ENCODE measurements at regions of chr2 and their contacts with region 1.

Region 1: DNA sequence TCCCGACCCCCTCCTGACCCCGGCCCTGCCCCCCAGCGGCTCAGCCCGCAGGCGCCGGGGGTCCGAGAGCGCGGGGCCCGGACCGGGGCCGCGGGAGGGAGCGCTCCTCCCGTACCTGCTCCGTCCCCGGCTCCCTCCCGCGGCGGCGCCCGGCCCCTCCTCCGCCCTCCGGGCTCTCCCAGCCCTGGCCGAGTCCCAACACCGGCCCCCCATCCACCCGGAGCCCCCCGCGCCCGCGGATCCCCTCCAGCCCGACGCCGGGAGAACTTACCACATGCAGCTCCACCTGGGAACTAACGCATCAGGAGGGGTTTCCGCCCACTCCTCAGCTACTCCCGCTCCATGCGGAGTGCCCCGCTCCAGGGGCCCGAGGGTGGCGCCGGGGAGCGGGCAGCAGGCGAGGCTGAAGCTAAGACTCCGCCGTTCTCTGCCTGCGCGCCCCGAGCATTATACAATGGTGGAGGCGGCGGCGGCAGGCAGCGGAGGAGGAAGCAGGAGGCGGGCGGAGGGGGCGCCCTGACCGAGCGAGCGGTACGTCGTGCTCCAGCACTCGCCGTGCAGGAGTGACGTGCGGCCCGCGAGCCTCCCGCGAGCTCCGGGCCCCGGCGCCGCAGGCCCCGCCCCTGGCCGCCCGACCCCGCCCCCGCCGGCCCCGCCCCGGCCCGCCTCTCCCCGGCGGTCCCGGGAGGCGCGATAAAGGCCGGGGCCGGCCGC is at the start of gene SERTAD2:
- DNase-seq: peak; percentile 84 to 89 (median 88)
- H3K4me3 ChIP-seq: peak within 1 kb of the TSS; percentile 70 to 83
- H3K4me3 Mint-ChIP-seq: peak within 1 kb of the TSS; percentile 90 to 99 (median 92)
- H3K27ac ChIP-seq: peak within 1 kb of the TSS; percentile 83
- H3K27ac Mint-ChIP-seq: peak within 1 kb of the TSS; percentile 90 to 98 (median 95)
- H3K4me1 ChIP-seq: peaks cover 53% of the 10 kb centered on the region
- H3K4me1 Mint-ChIP-seq: peaks cover 34 to 63% (median 50%) of the 10 kb centered on the region in 4 donors
- H3K27me3 ChIP-seq: no peaks in the 10 kb centered on the region
- H3K27me3 Mint-ChIP-seq: no peaks in the 10 kb centered on the region
- total RNA-seq, gene SERTAD2: 23.5 to 24.6 TPM

Region 2: DNA sequence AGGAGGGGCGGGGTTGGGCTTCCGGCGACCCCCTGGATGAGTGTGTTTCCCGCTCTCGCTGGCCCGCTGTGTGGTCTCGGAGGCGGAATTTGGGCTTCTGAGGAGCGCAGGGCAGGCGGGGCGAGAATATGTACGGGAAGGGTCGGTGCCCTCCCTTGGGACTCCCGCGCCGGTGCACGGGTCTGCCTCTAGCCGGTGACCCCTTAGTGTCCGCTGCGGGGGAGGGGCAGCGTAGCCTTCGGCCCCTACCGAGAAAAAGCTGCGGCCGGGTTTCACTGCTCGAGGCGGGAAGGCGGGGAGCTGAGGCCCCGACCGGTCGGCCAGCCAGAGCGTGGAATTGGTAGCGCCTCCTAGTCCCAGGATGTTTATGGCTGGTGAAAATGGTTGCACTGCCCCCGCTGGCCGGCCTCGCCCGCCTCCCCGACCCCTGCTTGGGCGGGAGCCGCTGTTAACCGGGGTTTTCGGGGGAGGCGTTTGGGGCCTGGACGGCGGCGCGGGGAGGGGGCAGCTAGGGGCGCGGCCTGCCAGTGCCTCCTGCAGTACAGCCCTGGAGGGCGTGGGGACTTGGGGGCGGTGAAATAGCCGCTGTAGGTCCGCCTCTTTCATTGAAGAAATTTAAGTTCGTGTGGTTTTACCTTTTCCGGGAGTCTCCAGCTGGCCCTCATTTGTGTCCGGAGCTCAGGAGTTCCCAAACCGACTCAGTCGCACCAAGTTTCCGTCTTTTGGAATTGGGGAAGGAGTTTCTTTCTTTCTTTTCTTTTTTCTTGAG is 812.1 kb before region 1 on chr2 and contains the start of gene UGP2:
- CTCF ChIA-PET with region 1: no interaction called
- POLR2A ChIA-PET with region 1: interaction called, 10 read pairs
- intact Hi-C with region 1: no loop called
- DNase-seq: peak; percentile 82 to 94 (median 83)
- H3K4me3 ChIP-seq: peak within 1 kb of the TSS; percentile 63 to 85
- H3K4me3 Mint-ChIP-seq: peak within 1 kb of the TSS; percentile 96 to 100 (median 98)
- H3K27ac ChIP-seq: peak within 1 kb of the TSS; percentile 71
- H3K27ac Mint-ChIP-seq: peak within 1 kb of the TSS; percentile 95 to 100 (median 97)
- H3K4me1 ChIP-seq: peaks cover 44% of the 10 kb centered on the region
- H3K4me1 Mint-ChIP-seq: peaks cover 38 to 63% (median 51%) of the 10 kb centered on the region in 4 donors
- H3K27me3 ChIP-seq: no peaks in the 10 kb centered on the region
- H3K27me3 Mint-ChIP-seq: no peaks in the 10 kb centered on the region
- total RNA-seq, gene UGP2: 77.6 to 92.7 TPM

Region 3: GRCh38 chr2:64666810-64667438 is 13.4 kb after region 1 on chr2:
- CTCF ChIA-PET with region 1: interaction called, 118 read pairs
- POLR2A ChIA-PET with region 1: interaction called, 158 read pairs
- intact Hi-C with region 1: loop called (anchors 1 kb)
- DNase-seq: peak in 3 of 5 donors; percentile 12 to 25 (median 18)
- H3K4me3 ChIP-seq: no peak overlapping the region
- H3K4me3 Mint-ChIP-seq: peak overlapping the region; percentile 1 to 68 (median 35)
- H3K27ac ChIP-seq: no peak overlapping the region
- H3K27ac Mint-ChIP-seq: peak overlapping the region; percentile 61 to 94 (median 67)
- H3K4me1 ChIP-seq: peaks cover 34% of the 10 kb centered on the region
- H3K4me1 Mint-ChIP-seq: peaks cover 15 to 34% (median 25%) of the 10 kb centered on the region in 4 donors
- H3K27me3 ChIP-seq: no peaks in the 10 kb centered on the region
- H3K27me3 Mint-ChIP-seq: no peaks in the 10 kb centered on the region

Region 4: DNA sequence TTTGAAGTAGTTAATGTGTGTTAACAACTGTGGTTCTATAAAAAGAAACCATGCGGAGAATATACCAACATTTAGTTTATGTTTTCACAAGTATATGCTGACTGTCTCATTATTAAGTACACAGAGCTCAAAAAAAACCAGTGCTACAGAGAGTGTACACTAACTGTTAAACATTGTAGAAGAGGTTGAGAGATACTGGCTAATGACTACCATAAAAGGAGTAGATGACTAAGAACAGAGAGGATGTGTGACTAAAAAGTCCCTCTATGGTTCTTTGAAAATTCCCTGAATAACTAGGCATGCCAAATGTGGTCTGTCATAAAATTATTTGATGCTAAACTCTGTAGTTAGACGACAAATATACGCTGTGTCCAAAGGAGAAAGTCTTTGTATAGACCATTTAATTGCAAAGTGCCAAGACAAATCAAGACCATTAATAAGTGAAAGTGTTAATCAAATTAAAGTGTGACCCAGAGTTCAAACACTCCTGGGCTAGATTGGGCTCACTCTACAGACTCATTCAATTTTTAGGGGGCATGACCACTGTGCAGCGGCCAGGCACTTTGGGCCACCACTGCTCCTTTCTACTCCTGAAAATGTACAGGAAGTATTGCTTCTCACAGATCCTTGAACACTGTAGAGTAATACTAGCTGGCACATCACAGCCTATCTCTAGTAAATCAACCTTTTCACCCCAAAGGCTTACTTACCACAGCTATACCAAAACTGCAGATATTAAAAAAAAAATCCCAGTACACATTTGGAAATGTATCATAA is 45.4 kb after region 1 on chr2:
- CTCF ChIA-PET with region 1: interaction called, 9 read pairs
- POLR2A ChIA-PET with region 1: interaction called, 9 read pairs
- intact Hi-C with region 1: loop called (anchors 2 kb)
- DNase-seq: no peak
- H3K4me3 ChIP-seq: no peak overlapping the region
- H3K4me3 Mint-ChIP-seq: peak overlapping the region in 5 of 8 donors; percentile 9 to 53 (median 22)
- H3K27ac ChIP-seq: no peak overlapping the region
- H3K27ac Mint-ChIP-seq: peak overlapping the region in 3 of 7 donors; percentile 2 to 34 (median 22)
- H3K4me1 ChIP-seq: peaks cover 36% of the 10 kb centered on the region
- H3K4me1 Mint-ChIP-seq: peaks cover 21 to 41% (median 30%) of the 10 kb centered on the region in 4 donors
- H3K27me3 ChIP-seq: no peaks in the 10 kb centered on the region
- H3K27me3 Mint-ChIP-seq: no peaks in the 10 kb centered on the region

Region 5: GRCh38 chr2:64730551-64731262 is 77.2 kb after region 1 on chr2:
- CTCF ChIA-PET with region 1: interaction called, 33 read pairs
- POLR2A ChIA-PET with region 1: interaction called, 79 read pairs
- intact Hi-C with region 1: loop called (anchors 2 kb)
- DNase-seq: peak; percentile 44 to 75 (median 50)
- H3K4me3 ChIP-seq: peak overlapping the region; percentile 32 to 68
- H3K4me3 Mint-ChIP-seq: peak overlapping the region; percentile 83 to 94 (median 89)
- H3K27ac ChIP-seq: peak overlapping the region; percentile 72
- H3K27ac Mint-ChIP-seq: peak overlapping the region; percentile 95 to 98 (median 97)
- H3K4me1 ChIP-seq: peaks cover 42% of the 10 kb centered on the region
- H3K4me1 Mint-ChIP-seq: peaks cover 31 to 61% (median 43%) of the 10 kb centered on the region in 4 donors
- H3K27me3 ChIP-seq: no peaks in the 10 kb centered on the region
- H3K27me3 Mint-ChIP-seq: no peaks in the 10 kb centered on the region

Region 6: GRCh38 chr2:64767670-64768468 is 114.4 kb after region 1 on chr2:
- CTCF ChIA-PET with region 1: interaction called, 23 read pairs
- POLR2A ChIA-PET with region 1: interaction called, 60 read pairs
- intact Hi-C with region 1: loop called (anchors 1 kb)
- DNase-seq: peak; percentile 66 to 86 (median 69)
- H3K4me3 ChIP-seq: peak overlapping the region; percentile 47 to 72
- H3K4me3 Mint-ChIP-seq: peak overlapping the region; percentile 86 to 99 (median 94)
- H3K27ac ChIP-seq: peak overlapping the region; percentile 90
- H3K27ac Mint-ChIP-seq: peak overlapping the region; percentile 81 to 97 (median 96)
- H3K4me1 ChIP-seq: peaks cover 14% of the 10 kb centered on the region
- H3K4me1 Mint-ChIP-seq: peaks cover 12 to 23% (median 13%) of the 10 kb centered on the region in 4 donors
- H3K27me3 ChIP-seq: no peaks in the 10 kb centered on the region
- H3K27me3 Mint-ChIP-seq: no peaks in the 10 kb centered on the region

Region 7: GRCh38 chr2:64831134-64831976 is 177.8 kb after region 1 on chr2:
- CTCF ChIA-PET with region 1: interaction called, 90 read pairs
- POLR2A ChIA-PET with region 1: interaction called, 46 read pairs
- intact Hi-C with region 1: loop called (anchors 1 kb)
- DNase-seq: peak; percentile 74 to 90 (median 75)
- H3K4me3 ChIP-seq: peak overlapping the region; percentile 22 to 48
- H3K4me3 Mint-ChIP-seq: peak overlapping the region; percentile 19 to 78 (median 66)
- H3K27ac ChIP-seq: no peak overlapping the region
- H3K27ac Mint-ChIP-seq: peak overlapping the region in 5 of 7 donors; percentile 31 to 72 (median 45)
- H3K4me1 ChIP-seq: peaks cover 10% of the 10 kb centered on the region
- H3K4me1 Mint-ChIP-seq: peaks cover 2 to 12% (median 8%) of the 10 kb centered on the region in 4 donors
- H3K27me3 ChIP-seq: no peaks in the 10 kb centered on the region
- H3K27me3 Mint-ChIP-seq: peaks cover 2 to 3% of the 10 kb centered on the region in 2 donors